ENCODE measurements at regions of chr1 and their contacts with region 1.

Region 1: DNA sequence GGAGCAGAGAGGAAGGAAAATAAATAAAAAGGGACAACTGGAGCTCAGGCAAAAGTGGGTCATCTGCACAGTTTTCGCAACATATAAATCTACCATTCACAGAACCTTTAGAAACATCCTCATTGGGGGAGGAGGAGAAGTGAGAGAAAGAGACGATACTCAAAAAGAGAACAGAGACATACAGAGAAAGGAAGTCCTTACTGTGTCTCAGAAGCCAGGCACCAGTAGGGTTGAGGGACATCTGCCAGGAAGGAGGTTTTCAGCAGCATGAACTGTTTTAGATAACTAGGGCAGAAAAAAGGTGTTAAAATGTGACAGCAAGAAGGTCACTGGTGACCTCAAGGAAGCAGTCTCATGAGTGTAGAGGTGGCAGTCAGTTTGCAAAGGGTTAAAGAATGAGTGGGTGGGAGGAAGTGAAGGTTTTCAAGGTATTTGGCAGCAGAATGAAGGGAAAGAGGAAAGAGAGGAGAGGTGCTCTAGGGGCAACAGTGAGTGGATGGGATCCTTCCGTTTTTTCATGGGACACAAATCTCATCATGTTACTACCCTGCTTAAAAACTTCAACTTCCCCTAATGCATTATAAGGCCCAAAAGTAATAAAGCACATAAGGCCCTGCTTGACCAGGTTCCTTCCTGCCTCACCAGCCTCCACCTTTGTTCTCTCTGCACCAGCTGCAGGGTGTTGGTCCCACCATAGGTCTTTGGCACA is 9.5 kb downstream of the JAK1 start:
- DNase-seq: peak in 3 of 9 experiments; percentile 36 to 65 (median 46)
- ATAC-seq: peak; percentile 67
- H3K4me3 ChIP-seq: no peak overlapping the region
- H3K4me3 Mint-ChIP-seq: no peak overlapping the region
- H3K27ac ChIP-seq: peak overlapping the region in 1 of 2 experiments; percentile 61
- H3K27ac Mint-ChIP-seq: no peak overlapping the region
- H3K4me1 ChIP-seq: peaks cover 92% of the 10 kb centered on the region
- H3K4me1 Mint-ChIP-seq: peaks cover 56% of the 10 kb centered on the region
- H3K27me3 ChIP-seq: no peaks in the 10 kb centered on the region
- H3K27me3 Mint-ChIP-seq: no peaks in the 10 kb centered on the region
- CTCF ChIP-seq: no peak

Region 2: GRCh38 chr1:64744492-64745180 is 212.3 kb before region 1 on chr1 and contains the start of gene RAVER2:
- CTCF ChIA-PET with region 1: no interaction called
- POLR2A ChIA-PET with region 1: no interaction called
- intact Hi-C with region 1: loop called in 1 of 2 experiments (anchors 5 kb)
- DNase-seq: peak; percentile 16 to 79 (median 57)
- ATAC-seq: peak; percentile 81
- H3K4me3 ChIP-seq: peak within 1 kb of the TSS; percentile 52 to 64
- H3K4me3 Mint-ChIP-seq: peak within 1 kb of the TSS; percentile 90
- H3K27ac ChIP-seq: peak within 1 kb of the TSS in 1 of 2 experiments; percentile 53
- H3K27ac Mint-ChIP-seq: peak within 1 kb of the TSS; percentile 75
- H3K4me1 ChIP-seq: peaks cover 13% of the 10 kb centered on the region
- H3K4me1 Mint-ChIP-seq: peaks cover 22% of the 10 kb centered on the region
- H3K27me3 ChIP-seq: no peaks in the 10 kb centered on the region
- H3K27me3 Mint-ChIP-seq: peaks cover 4% of the 10 kb centered on the region
- CTCF ChIP-seq: peak; percentile 43
- total RNA-seq, gene RAVER2: 1.1 TPM